ENCODE measurements at regions of chr7 and their contacts with region 1.

Region 1: DNA sequence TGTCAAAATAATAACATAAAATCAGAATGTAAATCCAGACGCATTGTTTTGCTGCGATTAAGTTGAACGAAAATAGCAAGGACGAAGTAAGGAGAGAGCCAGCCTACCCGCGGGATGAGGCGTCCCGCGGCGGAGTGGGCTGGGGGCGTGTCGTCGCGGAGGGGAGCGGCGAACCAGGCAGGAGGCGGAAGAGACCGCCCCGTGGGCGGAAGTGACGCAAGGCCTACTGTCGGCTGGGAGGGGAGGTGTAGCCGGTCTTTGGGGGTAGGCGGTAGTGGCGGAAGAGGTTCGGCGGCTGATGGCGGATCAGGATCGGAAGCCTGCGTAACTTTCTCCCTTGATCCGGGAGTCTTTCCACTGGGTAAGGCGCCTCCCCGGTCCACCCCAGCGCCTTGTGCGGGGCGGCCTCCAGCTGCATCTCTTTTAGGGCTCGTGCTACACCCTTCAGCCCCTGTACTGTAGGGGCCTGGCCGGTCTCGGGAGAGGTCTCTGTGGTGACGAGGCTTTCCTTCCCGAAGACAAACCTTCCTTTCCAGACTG is at the start of gene TAX1BP1:
- DNase-seq: peak; percentile 95
- ATAC-seq: peak; percentile 94
- H3K4me3 ChIP-seq: peak within 1 kb of the TSS; percentile 94 to 100 (median 98)
- H3K4me3 Mint-ChIP-seq: peak within 1 kb of the TSS; percentile 96
- H3K27ac ChIP-seq: peak within 1 kb of the TSS; percentile 93
- H3K27ac Mint-ChIP-seq: peak within 1 kb of the TSS; percentile 99
- H3K4me1 ChIP-seq: peaks cover 13 to 16% of the 10 kb centered on the region in 2 donors
- H3K4me1 Mint-ChIP-seq: peaks cover 33% of the 10 kb centered on the region
- H3K27me3 ChIP-seq: no peaks in the 10 kb centered on the region
- H3K27me3 Mint-ChIP-seq: no peaks in the 10 kb centered on the region
- CTCF ChIP-seq: no peak
- total RNA-seq, gene TAX1BP1: 94.7 and 104 TPM in 2 replicates

Region 2: DNA sequence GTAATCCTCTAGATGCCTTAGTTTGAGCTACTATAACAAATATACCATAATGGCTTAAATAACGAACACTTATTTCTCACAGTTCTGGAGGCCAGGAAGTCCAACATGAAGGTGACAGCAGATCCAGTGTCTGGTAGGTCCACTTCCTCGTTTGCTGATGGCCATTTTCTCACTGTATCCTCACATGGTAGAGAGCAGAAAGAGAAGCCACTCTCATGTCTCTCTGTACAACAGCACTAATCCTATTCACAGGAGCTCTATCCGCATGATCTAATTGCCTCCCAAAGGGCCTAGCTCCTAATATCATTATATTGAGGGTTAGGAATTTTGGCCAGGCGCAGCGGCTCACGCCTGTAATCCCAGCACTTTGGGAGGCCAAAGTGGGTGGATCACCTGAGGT is 87.5 kb before region 1 on chr7:
- CTCF ChIA-PET with region 1: no interaction called
- POLR2A ChIA-PET with region 1: no interaction called
- intact Hi-C with region 1: no loop called
- DNase-seq: no peak
- ATAC-seq: no peak
- H3K4me3 ChIP-seq: no peak overlapping the region
- H3K4me3 Mint-ChIP-seq: no peak overlapping the region
- H3K27ac ChIP-seq: no peak overlapping the region
- H3K27ac Mint-ChIP-seq: no peak overlapping the region
- H3K4me1 ChIP-seq: no peaks in the 10 kb centered on the region
- H3K4me1 Mint-ChIP-seq: no peaks in the 10 kb centered on the region
- H3K27me3 ChIP-seq: no peaks in the 10 kb centered on the region
- H3K27me3 Mint-ChIP-seq: no peaks in the 10 kb centered on the region
- CTCF ChIP-seq: no peak

Region 3: GRCh38 chr7:27697861-27698430 is 42.0 kb before region 1 on chr7:
- CTCF ChIA-PET with region 1: interaction called, 3 read pairs
- POLR2A ChIA-PET with region 1: interaction called, 3 read pairs
- intact Hi-C with region 1: loop called (anchors 1 kb)
- DNase-seq: peak; percentile 63
- ATAC-seq: peak; percentile 94
- H3K4me3 ChIP-seq: no peak overlapping the region
- H3K4me3 Mint-ChIP-seq: peak overlapping the region; percentile 60
- H3K27ac ChIP-seq: peak overlapping the region; percentile 64 to 73
- H3K27ac Mint-ChIP-seq: peak overlapping the region; percentile 87
- H3K4me1 ChIP-seq: peaks cover 14 to 15% of the 10 kb centered on the region in 2 donors
- H3K4me1 Mint-ChIP-seq: peaks cover 16% of the 10 kb centered on the region
- H3K27me3 ChIP-seq: peaks cover 0 to 5% (median 1%) of the 10 kb centered on the region in 4 experiments
- H3K27me3 Mint-ChIP-seq: peaks cover 4% of the 10 kb centered on the region
- CTCF ChIP-seq: no peak

Measured in B cell (primary cell).